ENCODE measurements at regions of chr16 and their contacts with region 1.

Region 1: DNA sequence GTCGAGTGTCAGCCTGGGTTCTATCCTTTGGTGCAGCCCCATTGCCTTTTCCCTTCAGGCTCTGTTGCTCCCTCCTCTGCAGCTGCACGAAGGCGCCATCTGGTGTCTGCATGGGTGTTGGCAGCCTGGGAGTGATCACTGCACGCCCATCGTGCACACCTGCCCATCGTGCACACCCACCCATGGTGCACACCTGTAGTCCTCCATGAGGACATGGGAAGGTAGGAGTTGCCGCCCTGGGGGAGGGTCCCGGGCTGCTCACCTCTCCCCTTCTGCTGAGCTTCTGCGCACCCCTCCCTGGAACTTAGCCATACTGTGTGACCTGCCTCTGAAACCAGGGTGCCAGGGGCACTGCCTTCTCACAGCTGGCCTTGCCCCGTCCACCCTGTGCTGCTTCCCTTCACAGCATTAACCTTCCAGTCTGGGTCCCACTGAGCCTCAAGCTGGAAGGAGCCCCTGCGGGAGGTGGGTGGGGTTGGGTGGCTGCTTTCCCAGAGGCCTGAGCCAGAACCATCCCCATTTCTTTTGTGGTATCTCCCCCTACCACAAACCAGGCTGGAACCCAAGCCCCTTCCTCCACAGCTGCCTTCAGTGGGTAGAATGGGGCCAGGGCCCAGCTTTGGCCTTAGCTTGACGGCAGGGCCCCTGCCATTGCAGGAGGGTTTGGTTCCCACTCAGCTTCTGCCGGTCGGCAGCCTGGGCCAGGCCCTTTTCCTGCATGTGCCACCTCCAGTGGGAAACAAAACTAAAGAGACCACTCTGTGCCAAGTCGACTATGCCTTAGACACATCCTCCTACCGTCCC is 2.9 kb downstream of the CTRL start:
- DNase-seq: peak; percentile 59 to 69
- H3K4me3 ChIP-seq: no peak overlapping the region
- H3K27ac ChIP-seq: no peak overlapping the region
- H3K4me1 ChIP-seq: peaks cover 0 to 3% of the 10 kb centered on the region in 2 donors
- H3K27me3 ChIP-seq: no peaks in the 10 kb centered on the region
- CTCF ChIP-seq: peak; percentile 69 to 86 (median 78)
- POLR2A ChIP-seq: no peak

Region 2: GRCh38 chr16:67685388-67686112 is 243.2 kb before region 1 on chr16:
- intact Hi-C with region 1: no loop called
- DNase-seq: no peak
- H3K4me3 ChIP-seq: no peak overlapping the region
- H3K27ac ChIP-seq: peak overlapping the region in 1 of 2 donors; percentile 42
- H3K4me1 ChIP-seq: no peaks in the 10 kb centered on the region
- H3K27me3 ChIP-seq: no peaks in the 10 kb centered on the region
- CTCF ChIP-seq: no peak
- POLR2A ChIP-seq: no peak

Region 3: GRCh38 chr16:67816240-67817031 is 112.3 kb before region 1 on chr16:
- intact Hi-C with region 1: loop called (anchors 10 kb)
- DNase-seq: peak; percentile 82 to 87
- H3K4me3 ChIP-seq: no peak overlapping the region
- H3K27ac ChIP-seq: no peak overlapping the region
- H3K4me1 ChIP-seq: no peaks in the 10 kb centered on the region
- H3K27me3 ChIP-seq: no peaks in the 10 kb centered on the region
- CTCF ChIP-seq: peak; percentile 99 to 100 (median 100)
- POLR2A ChIP-seq: peak in 1 of 2 donors; percentile 18

Region 4: GRCh38 chr16:67883872-67884261 is 44.9 kb before region 1 on chr16:
- intact Hi-C with region 1: loop called (anchors 5 kb)
- DNase-seq: peak; percentile 48 to 52
- H3K4me3 ChIP-seq: no peak overlapping the region
- H3K27ac ChIP-seq: peak overlapping the region; percentile 38 to 72
- H3K4me1 ChIP-seq: peaks cover 0 to 5% of the 10 kb centered on the region in 2 donors
- H3K27me3 ChIP-seq: no peaks in the 10 kb centered on the region
- CTCF ChIP-seq: peak; percentile 66 to 80 (median 75)
- POLR2A ChIP-seq: no peak